SK-N-SH (cell line): ENCODE measurements at regions of chr7 and their contacts with region 1.

Region 1: GRCh38 chr7:41940760-41941343 is 238.0 kb upstream of the INHBA start:
- DNase-seq: peak; percentile 73
- H3K4me3 ChIP-seq: no peak overlapping the region
- H3K27ac ChIP-seq: no peak overlapping the region
- H3K4me1 ChIP-seq: peaks cover 0 to 3% of the 10 kb centered on the region in 2 experiments; a peak in 1 of 4 replicates
- H3K27me3 ChIP-seq: no peaks in the 10 kb centered on the region
- CTCF ChIP-seq: peak; percentile 99
- EP300 ChIP-seq: no peak
- RAD21 ChIP-seq: peak; percentile 82

Region 2: GRCh38 chr7:41189866-41190265 is 751.0 kb before region 1 on chr7:
- CTCF ChIA-PET with region 1: no interaction called
- POLR2A ChIA-PET with region 1: no interaction called
- DNase-seq: no peak
- H3K4me3 ChIP-seq: no peak overlapping the region
- H3K27ac ChIP-seq: peak overlapping the region in 1 of 2 experiments; percentile 92; a peak in 2 of 4 replicates
- H3K4me1 ChIP-seq: peaks cover 17 to 23% of the 10 kb centered on the region in 2 experiments
- H3K27me3 ChIP-seq: no peaks in the 10 kb centered on the region
- CTCF ChIP-seq: no peak
- EP300 ChIP-seq: peak in 1 of 2 experiments; percentile 75; a peak in 1 of 4 replicates
- RAD21 ChIP-seq: no peak

Region 3: DNA sequence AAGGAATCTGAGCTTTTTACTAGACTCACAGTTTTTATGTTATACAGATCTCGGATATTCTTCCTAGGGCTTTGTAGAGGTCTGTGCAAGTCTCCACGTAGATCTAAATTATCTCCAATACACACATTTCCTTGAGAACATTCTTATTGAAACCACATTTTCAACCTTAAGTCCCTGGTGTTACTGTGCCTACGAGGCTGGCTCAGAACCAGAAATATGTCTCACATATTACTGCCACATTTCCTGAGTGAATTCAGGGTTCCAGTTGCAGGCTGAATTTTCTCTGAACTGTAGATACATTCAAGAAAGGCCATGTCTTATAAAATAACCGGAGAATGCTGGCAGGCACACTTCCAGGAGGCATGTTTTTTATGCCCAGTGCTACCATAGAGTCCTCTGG is 284.5 kb before region 1 on chr7:
- CTCF ChIA-PET with region 1: no interaction called
- POLR2A ChIA-PET with region 1: no interaction called
- DNase-seq: peak; percentile 8
- H3K4me3 ChIP-seq: no peak overlapping the region
- H3K27ac ChIP-seq: peak overlapping the region; percentile 49 to 69
- H3K4me1 ChIP-seq: peaks cover 4 to 8% of the 10 kb centered on the region in 2 experiments; a peak in 2 of 4 replicates
- H3K27me3 ChIP-seq: no peaks in the 10 kb centered on the region
- CTCF ChIP-seq: no peak
- EP300 ChIP-seq: no peak
- RAD21 ChIP-seq: no peak

Region 4: GRCh38 chr7:41779918-41780317 is 160.9 kb before region 1 on chr7:
- CTCF ChIA-PET with region 1: no interaction called
- POLR2A ChIA-PET with region 1: no interaction called
- DNase-seq: no peak
- H3K4me3 ChIP-seq: no peak overlapping the region
- H3K27ac ChIP-seq: no peak overlapping the region
- H3K4me1 ChIP-seq: no peaks in the 10 kb centered on the region
- H3K27me3 ChIP-seq: no peaks in the 10 kb centered on the region
- CTCF ChIP-seq: no peak
- EP300 ChIP-seq: no peak
- RAD21 ChIP-seq: no peak

Region 5: GRCh38 chr7:41892356-41893100 is 48.3 kb before region 1 on chr7:
- CTCF ChIA-PET with region 1: interaction called, 10 read pairs
- POLR2A ChIA-PET with region 1: no interaction called
- DNase-seq: peak; percentile 19
- H3K4me3 ChIP-seq: no peak overlapping the region
- H3K27ac ChIP-seq: peak overlapping the region in 1 of 2 experiments; percentile 36; a peak in 2 of 4 replicates
- H3K4me1 ChIP-seq: peaks cover 0 to 56% of the 10 kb centered on the region in 2 experiments
- H3K27me3 ChIP-seq: no peaks in the 10 kb centered on the region
- CTCF ChIP-seq: peak; percentile 58
- EP300 ChIP-seq: no peak
- RAD21 ChIP-seq: no peak

Region 6: DNA sequence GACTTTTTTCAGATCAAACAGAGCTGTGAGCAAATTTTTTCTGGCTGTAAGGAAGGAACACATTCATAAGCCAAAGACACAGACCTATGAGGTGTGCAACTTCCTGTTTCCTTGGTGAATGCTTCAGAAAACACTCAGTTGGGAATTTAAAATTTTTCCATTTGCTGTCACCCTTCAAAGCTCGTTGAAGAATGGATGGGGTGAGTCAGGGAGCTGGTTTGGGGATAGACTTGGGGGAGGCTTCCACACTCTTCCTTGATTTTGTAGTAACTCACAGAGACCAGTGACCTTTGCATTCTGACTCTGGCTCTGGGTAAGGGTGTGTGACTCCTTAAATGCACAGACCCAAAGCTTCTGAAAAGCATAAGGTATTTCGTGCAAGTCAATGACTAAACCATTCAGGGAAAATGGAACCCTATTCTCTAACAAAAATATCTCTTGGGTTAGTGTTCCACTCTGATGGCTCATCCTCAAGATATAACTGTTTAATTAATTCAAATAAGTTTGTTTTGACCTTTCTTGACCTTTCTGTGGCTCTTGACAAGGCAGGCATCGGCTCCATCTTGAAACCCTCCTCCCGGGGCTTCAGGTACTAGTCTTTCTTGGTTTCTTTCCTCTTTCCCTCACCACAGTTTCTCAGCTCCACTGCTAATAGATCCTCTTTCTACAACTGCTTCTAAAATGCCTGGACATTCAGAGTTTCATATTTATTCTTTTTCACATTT is 10.2 kb before region 1 on chr7:
- CTCF ChIA-PET with region 1: interaction called, 73 read pairs
- POLR2A ChIA-PET with region 1: no interaction called
- DNase-seq: no peak
- H3K4me3 ChIP-seq: no peak overlapping the region
- H3K27ac ChIP-seq: peak overlapping the region in 1 of 2 experiments; percentile 56; a peak in 2 of 4 replicates
- H3K4me1 ChIP-seq: peaks cover 0 to 14% of the 10 kb centered on the region in 2 experiments; a peak in 2 of 4 replicates
- H3K27me3 ChIP-seq: no peaks in the 10 kb centered on the region
- CTCF ChIP-seq: no peak
- EP300 ChIP-seq: peak in 1 of 2 experiments; percentile 47; a peak in 1 of 4 replicates
- RAD21 ChIP-seq: no peak

Region 7: GRCh38 chr7:41977151-41977651 is 36.3 kb after region 1 on chr7:
- CTCF ChIA-PET with region 1: interaction called, 26 read pairs
- POLR2A ChIA-PET with region 1: no interaction called
- DNase-seq: peak; percentile 43
- H3K4me3 ChIP-seq: peak overlapping the region in 1 of 2 experiments; percentile 7; a peak in 1 of 4 replicates
- H3K27ac ChIP-seq: no peak overlapping the region
- H3K4me1 ChIP-seq: no peaks in the 10 kb centered on the region
- H3K27me3 ChIP-seq: peaks cover 29% of the 10 kb centered on the region
- CTCF ChIP-seq: peak; percentile 98
- EP300 ChIP-seq: no peak
- RAD21 ChIP-seq: peak; percentile 75

Region 8: DNA sequence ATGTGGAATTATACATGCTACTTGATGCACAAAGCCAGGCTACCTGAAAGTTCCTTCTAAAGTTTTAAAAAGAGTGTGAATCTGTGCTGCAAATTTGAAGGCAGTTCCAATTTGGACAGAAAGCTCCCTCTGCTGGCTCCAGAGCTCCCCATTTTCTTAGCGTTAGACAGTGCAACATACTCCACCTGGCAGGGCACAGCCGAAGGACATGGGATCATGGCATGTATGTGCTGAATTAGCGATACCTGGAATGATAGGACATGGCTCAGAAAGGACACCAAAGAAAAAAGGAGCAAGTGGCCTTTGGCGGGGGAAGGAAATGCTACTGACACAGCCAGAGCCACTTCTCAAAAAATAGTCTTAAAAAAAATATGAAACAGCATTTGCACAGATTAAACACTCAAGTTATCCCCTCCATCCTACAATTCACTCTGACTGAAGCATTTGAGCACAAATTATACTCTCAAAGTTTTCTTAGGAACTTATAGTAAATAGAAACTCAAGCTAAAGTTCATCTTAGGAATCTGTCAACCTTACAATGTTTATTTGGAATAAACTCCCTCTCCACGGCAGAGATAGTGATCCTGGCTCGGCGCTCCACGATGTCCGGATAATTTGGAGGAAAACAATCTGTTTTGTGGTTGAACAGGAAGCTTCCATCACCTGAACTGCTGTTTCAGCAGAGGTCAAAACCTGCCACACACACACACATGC is 891.0 kb after region 1 on chr7:
- CTCF ChIA-PET with region 1: interaction called, 21 read pairs
- POLR2A ChIA-PET with region 1: no interaction called
- DNase-seq: no peak
- H3K4me3 ChIP-seq: peak overlapping the region in 1 of 2 experiments; percentile 24; a peak in 1 of 4 replicates
- H3K27ac ChIP-seq: no peak overlapping the region
- H3K4me1 ChIP-seq: no peaks in the 10 kb centered on the region
- H3K27me3 ChIP-seq: peaks cover 48% of the 10 kb centered on the region
- CTCF ChIP-seq: peak; percentile 67
- EP300 ChIP-seq: no peak
- RAD21 ChIP-seq: peak; percentile 52

Region 9: DNA sequence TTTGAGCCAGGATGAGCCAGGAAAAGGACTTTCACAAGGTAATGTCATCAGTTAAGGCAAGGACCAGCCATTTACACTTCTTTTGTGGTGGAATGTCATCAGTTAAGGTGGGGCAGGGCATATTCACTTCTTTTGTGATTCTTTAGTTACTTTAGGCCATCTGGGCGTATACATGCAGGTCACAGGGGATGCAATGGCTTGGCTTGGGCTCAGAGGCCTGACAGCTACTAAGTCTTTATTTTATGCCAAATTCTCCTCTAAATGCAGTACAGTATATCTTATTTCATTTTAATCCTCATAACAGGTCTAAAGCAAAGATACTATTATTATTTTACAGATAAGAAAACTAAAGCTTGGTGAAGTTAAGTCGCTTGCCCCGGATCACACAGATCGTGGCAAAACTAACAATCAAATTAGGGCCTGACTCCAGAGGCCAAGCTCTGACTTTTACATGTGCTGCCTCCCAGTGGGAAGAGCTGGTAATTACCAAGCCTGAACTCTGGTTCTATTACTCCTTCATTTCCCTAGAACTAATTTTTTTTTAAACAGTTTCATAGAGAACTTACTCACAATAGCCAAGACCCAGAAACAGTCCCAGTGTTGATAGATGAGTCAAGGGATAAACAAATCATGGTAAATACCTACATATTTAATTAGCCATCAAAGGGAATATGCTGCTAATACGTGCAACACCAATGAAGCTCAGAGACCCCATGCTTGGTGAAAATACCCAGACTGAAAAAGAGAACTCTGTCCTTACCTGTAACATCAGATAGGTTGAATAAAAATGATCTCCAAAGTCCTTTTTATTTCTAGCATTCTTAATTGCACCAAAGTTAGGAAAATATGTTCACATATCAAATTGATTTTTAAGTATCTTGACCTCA is 935.6 kb after region 1 on chr7:
- CTCF ChIA-PET with region 1: interaction called, 39 read pairs
- POLR2A ChIA-PET with region 1: no interaction called
- DNase-seq: peak; percentile 73
- H3K4me3 ChIP-seq: no peak overlapping the region
- H3K27ac ChIP-seq: no peak overlapping the region
- H3K4me1 ChIP-seq: no peaks in the 10 kb centered on the region
- H3K27me3 ChIP-seq: peaks cover 9% of the 10 kb centered on the region; the same call in 1 of the 2 replicates
- CTCF ChIP-seq: peak; percentile 94
- EP300 ChIP-seq: no peak
- RAD21 ChIP-seq: peak; percentile 64